Ovary (tissue), 10 donors: ENCODE measurements at regions of chr2 and their contacts with region 1.

Region 1: DNA sequence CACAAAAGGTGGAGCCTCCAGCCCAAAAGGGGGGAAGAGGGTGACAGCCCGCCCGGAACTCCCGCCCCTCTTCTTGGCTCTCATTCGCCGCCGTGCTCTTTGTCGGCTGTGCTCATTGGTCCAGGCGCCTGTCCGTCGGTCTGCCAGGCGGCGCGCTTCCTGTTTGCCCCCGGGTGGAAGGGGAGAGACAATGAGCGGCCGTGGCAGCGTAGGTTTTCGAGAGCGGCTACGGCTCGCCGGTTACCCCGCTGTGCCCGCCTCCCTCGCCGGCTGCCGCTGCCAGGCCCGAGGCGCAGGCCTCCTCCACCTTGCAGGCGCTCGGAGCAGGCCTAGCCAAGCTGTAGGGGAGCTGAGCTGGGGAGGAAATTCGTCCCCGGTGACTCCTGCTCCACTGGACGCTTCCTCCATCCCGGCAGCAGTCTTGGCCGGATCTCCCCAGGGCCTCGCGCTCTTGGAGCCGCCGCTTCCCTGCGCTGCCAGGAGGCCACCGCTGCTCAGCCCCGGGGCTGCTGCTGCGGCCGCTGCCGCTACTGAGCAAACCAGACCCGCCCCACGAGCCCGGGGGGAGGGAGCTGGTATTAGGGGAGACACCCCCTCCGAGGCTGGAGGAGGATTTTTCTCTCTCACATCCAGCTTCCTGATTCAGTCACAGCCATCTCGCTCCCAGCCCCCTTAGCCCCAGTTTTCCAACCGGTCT is at the start of gene SP3:
- DNase-seq: peak; percentile 98 to 99 (median 98)
- H3K4me3 ChIP-seq: peak within 1 kb of the TSS; percentile 95
- H3K27ac ChIP-seq: peak within 1 kb of the TSS; percentile 100
- H3K4me1 ChIP-seq: peaks cover 3% of the 10 kb centered on the region
- H3K27me3 ChIP-seq: no peaks in the 10 kb centered on the region
- CTCF ChIP-seq: peak in 1 of 3 donors; percentile 37
- EP300 ChIP-seq: no peak
- POLR2A ChIP-seq: peak; percentile 94
- total RNA-seq, gene SP3: 71.1 to 131 (median 97.3) TPM

Region 2: DNA sequence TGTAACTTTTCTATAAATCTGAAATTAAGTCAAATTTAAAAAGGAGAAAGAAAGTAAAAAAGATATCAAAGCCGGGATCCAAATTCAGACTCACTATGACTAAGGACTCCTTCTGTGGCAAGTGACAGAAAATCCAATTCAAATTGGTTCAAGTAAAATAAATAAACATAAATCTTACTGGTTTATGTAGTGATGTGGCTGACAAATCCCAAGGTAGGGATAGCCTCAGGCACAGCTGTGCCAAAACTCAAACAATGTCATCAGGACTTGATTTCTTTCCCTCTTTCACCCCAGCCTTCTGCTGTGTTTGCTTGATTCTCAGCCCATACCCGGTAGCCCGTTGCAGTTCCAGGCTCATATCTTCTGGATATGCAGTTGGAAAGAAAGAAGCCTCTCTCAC is 284.9 kb before region 1 on chr2:
- intact Hi-C with region 1: no loop called
- DNase-seq: no peak
- H3K4me3 ChIP-seq: no peak overlapping the region
- H3K27ac ChIP-seq: no peak overlapping the region
- H3K4me1 ChIP-seq: no peaks in the 10 kb centered on the region
- H3K27me3 ChIP-seq: no peaks in the 10 kb centered on the region
- CTCF ChIP-seq: no peak
- EP300 ChIP-seq: no peak
- POLR2A ChIP-seq: no peak

Region 3: GRCh38 chr2:173692068-173692467 is 273.4 kb before region 1 on chr2:
- intact Hi-C with region 1: no loop called
- DNase-seq: no peak
- H3K4me3 ChIP-seq: no peak overlapping the region
- H3K27ac ChIP-seq: no peak overlapping the region
- H3K4me1 ChIP-seq: no peaks in the 10 kb centered on the region
- H3K27me3 ChIP-seq: no peaks in the 10 kb centered on the region
- CTCF ChIP-seq: no peak
- EP300 ChIP-seq: no peak
- POLR2A ChIP-seq: no peak

Region 4: DNA sequence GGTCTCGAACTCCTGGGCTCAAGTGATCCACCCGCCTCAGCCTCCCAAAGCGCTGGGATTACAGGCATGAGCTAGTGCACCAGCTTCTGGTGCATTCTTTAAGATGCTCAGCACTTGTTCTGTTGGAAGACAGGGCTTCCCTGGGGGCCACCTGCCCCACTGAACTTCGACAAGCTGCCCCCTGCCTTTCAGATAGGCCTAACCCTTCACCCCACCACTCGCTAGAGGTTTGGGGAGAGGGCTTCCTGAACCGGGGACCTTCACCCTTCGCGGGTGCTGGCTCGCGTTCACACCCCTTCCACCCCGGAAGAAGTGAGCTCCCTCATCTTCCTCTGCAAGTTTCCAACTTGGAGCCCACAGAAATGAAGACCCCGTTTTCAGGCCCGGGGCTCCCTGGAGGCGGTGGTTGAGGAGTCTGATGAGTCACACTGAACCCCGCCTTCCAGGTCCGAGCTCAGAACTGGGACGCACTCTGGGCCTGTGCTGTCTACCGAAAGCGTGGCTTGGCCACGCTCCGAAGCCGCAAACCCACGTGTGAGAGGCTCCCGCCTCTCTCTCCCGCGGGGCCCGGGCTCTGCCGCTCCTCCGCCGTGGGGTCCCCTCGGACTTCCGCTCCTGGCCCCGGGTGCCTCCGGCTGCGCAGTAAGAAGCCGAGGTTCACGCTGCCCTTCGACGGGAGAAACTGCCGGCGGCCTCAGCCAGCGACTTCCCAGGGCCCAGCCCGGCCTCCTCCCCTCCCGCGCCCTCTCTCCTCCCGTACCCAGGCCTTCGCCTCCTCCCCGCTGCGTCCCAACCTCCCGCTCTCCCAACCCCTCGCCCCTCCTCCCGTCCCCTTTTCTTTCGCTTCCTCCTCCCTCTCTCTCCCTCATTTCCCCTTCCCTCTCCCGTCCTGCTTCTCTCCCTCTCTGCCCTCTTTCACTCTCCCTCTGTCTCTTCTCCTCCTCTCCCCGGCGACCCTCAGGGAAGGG is 47.2 kb after region 1 on chr2:
- intact Hi-C with region 1: loop called in 3 of 4 experiments (anchors 2 to 10 kb)
- DNase-seq: peak; percentile 81 to 87 (median 81)
- H3K4me3 ChIP-seq: peak overlapping the region; percentile 52
- H3K27ac ChIP-seq: peak overlapping the region; percentile 86 to 95
- H3K4me1 ChIP-seq: peaks cover 7% of the 10 kb centered on the region
- H3K27me3 ChIP-seq: no peaks in the 10 kb centered on the region
- CTCF ChIP-seq: no peak
- EP300 ChIP-seq: no peak
- POLR2A ChIP-seq: peak; percentile 2

Region 5: GRCh38 chr2:174025271-174026123 is 60.0 kb after region 1 on chr2:
- intact Hi-C with region 1: loop called in 1 of 4 experiments (anchors 5 kb)
- DNase-seq: peak; percentile 58 to 89 (median 75)
- H3K4me3 ChIP-seq: peak overlapping the region; percentile 15
- H3K27ac ChIP-seq: peak overlapping the region; percentile 42 to 72
- H3K4me1 ChIP-seq: no peaks in the 10 kb centered on the region
- H3K27me3 ChIP-seq: no peaks in the 10 kb centered on the region
- CTCF ChIP-seq: no peak
- EP300 ChIP-seq: no peak
- POLR2A ChIP-seq: no peak